Ascending aorta (tissue), 2 donors: ENCODE measurements at regions of chr20 and their contacts with region 1.

Region 1: DNA sequence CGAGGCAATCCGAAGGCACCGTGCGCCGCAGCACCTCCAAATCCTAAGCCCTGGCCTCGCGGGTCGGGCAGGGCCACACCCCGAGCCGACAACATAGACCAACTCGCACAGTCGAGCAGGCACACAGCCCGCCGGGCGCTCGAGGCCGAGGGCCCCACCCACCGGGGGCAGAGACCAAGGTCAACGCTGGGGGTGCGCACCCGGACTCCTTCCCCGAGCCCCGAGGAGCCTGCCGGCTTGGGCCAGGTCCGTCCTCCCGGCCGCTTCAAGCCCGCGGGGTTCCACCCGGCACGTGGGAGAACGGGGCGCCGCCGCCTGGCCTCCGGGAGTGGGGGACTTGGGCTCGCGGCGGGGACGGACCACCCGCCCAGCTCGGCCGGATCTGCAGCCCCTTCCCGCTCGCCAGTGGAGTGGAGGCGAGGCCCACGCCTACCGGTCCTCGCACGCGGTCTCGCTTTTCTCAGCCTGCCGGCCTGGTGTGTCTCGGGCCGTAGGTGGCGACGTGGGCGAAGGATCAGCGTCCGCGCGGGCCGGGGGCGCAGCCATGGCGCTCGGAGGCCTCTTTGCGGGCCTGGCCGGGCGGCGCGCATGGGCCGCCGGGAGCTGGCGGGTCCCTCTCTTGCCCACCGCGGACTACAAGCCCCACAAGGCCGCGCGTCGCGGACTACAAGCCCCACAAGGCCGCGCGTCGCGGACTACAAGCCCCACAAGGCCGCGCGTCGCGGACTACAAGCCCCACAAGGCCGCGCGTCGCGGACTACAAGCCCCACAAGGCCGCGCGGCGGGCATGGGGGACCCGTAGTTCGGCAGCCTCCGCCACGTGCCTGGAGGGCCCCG is at the start of gene UCKL1:
- DNase-seq: peak; percentile 73 to 96
- H3K4me3 ChIP-seq: peak within 1 kb of the TSS; percentile 75 to 93
- H3K27ac ChIP-seq: peak within 1 kb of the TSS; percentile 82 to 87
- H3K4me1 ChIP-seq: peaks cover 7 to 35% of the 10 kb centered on the region in 2 donors
- H3K27me3 ChIP-seq: no peaks in the 10 kb centered on the region
- CTCF ChIP-seq: no peak
- total RNA-seq, gene UCKL1: 95.4 TPM

Region 2: DNA sequence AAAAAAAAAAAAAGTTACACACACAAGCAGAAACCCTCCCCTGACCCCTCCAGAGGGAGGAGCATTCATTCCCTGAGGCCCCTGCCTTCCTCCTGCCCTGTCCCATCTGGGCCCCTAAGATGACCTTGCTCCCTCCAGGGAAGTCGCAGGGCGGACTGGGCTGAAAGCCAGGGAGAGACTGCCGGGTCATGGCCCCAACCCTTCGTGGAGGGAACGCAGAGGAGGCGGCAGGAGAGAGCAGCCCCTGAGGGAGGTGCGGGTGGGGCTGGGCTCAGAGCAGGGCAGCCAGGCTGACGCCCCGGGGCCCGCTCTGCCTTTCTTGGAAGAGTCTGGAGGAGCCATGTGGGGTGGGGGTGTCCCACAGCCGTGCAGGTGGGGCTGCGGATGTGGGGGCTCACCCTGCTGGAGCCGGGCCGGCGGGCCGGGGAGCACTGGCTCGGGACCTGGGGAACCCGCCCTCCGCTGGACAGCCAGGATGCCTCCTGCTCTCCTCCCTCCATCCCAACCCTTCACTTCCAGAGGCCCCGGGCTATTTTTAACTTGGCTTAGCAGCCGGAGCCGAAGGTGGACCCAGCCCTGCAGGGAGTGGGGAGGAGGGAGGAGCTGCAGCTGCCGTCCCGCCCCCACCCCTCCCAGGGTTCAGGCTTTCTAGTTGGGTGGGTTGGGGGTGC is 109.8 kb before region 1 on chr20:
- intact Hi-C with region 1: no loop called
- DNase-seq: no peak
- H3K4me3 ChIP-seq: peak overlapping the region in 1 of 2 donors; percentile 5
- H3K27ac ChIP-seq: no peak overlapping the region
- H3K4me1 ChIP-seq: peaks cover 0 to 8% of the 10 kb centered on the region in 2 donors
- H3K27me3 ChIP-seq: peaks cover 3% of the 10 kb centered on the region
- CTCF ChIP-seq: no peak

Region 3: DNA sequence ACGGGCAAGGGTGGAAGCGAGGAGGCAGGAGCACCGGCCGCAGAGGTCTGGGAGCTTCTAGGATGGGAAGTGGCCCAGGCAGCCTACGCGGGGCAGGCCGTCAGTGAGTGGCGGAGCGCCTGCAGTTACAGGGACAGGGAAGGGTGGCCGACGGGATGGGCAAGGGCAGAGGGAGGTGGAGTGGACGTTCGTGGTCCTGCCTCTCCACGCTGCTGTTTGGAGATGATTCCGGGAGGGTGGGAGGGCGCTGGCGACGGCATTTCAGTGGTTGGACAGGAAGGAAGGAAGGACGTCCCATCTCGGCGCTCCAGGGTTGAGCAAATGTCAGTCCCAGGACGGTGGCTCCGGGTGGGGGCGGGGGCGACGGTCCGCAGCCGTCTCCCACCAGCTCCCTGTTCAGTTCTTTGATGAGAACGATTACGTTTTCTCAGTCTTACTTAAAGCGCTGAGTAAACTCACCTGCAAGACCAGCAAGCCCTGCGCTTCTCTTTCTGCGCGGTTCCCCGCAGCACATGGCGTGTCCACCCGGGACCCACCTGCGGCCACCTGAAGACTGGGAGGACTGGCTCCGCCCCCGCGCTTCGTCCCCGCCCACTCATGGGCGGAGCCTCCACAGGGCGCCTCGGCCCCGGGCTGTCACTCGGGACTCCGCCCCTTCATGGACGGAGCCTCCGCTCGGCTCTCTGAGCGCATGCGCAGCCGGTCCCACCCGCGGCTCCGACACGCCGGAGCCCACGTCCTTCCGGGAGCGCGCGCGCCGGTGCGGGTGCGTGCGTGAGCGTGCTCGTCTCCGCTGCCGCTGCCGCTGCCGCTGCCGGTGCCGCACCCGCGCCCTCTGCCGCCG is 61.5 kb before region 1 on chr20 and contains the start of gene DNAJC5:
- intact Hi-C with region 1: loop called (anchors 2 kb)
- DNase-seq: peak; percentile 64 to 96
- H3K4me3 ChIP-seq: peak within 1 kb of the TSS; percentile 77 to 91
- H3K27ac ChIP-seq: peak within 1 kb of the TSS; percentile 62 to 63
- H3K4me1 ChIP-seq: peaks cover 11 to 12% of the 10 kb centered on the region in 2 donors
- H3K27me3 ChIP-seq: no peaks in the 10 kb centered on the region
- CTCF ChIP-seq: no peak
- total RNA-seq, gene DNAJC5: 42.9 TPM

Region 4: DNA sequence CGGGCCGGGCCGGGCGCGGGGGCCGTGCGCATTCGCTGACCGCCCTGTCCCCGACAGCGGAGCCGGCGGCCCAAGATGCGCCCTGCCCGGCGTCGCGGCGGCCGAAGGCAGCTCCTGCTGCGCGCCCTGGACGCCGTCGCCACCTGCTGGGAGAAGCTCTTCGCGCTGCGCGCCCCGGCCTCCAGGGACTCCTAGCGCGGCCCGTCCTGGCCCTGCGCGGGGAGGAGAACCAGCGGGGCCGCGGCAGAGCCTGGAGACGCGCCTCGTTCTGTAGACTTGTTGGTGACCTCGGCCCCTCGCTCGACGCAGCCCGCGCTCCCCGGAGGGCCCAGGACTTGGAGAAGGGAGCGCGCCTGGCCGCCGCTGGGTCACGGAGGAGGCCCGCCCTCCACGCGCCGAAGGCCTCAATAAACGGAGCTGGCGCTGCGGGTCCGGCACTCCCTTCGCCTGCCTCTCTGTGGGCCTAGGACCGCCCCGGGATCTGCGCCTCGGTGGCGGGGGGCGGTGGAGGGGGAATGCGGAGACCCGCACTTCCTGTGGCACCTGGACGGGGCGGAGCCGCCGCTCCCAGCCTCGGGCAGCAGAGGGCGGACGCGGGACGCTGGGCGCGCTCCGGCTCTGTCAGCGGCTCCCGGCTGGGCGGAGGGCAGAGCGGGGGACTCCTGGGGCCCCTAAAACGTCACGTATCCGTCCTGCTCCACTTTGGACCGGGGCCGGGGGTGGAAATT is 82.7 kb after region 1 on chr20:
- intact Hi-C with region 1: no loop called
- DNase-seq: peak in 1 of 2 donors; percentile 78
- H3K4me3 ChIP-seq: peak overlapping the region; percentile 47 to 56
- H3K27ac ChIP-seq: no peak overlapping the region
- H3K4me1 ChIP-seq: peaks cover 5 to 20% of the 10 kb centered on the region in 2 donors
- H3K27me3 ChIP-seq: peaks cover 27% of the 10 kb centered on the region
- CTCF ChIP-seq: peak; percentile 65 to 78 (median 75)

Region 5: GRCh38 chr20:64062596-64063388 is 106.7 kb after region 1 on chr20 and contains the start of gene TCEA2:
- intact Hi-C with region 1: loop called (anchors 2 kb)
- DNase-seq: peak; percentile 89 to 98
- H3K4me3 ChIP-seq: peak within 1 kb of the TSS; percentile 76 to 93
- H3K27ac ChIP-seq: peak within 1 kb of the TSS; percentile 87 to 90
- H3K4me1 ChIP-seq: peaks cover 16 to 22% of the 10 kb centered on the region in 2 donors
- H3K27me3 ChIP-seq: no peaks in the 10 kb centered on the region
- CTCF ChIP-seq: no peak
- total RNA-seq, gene TCEA2: 61.4 TPM